Mucosa of descending colon (tissue), 3 donors: ENCODE measurements at regions of chr17 and their contacts with region 1.

Region 1: DNA sequence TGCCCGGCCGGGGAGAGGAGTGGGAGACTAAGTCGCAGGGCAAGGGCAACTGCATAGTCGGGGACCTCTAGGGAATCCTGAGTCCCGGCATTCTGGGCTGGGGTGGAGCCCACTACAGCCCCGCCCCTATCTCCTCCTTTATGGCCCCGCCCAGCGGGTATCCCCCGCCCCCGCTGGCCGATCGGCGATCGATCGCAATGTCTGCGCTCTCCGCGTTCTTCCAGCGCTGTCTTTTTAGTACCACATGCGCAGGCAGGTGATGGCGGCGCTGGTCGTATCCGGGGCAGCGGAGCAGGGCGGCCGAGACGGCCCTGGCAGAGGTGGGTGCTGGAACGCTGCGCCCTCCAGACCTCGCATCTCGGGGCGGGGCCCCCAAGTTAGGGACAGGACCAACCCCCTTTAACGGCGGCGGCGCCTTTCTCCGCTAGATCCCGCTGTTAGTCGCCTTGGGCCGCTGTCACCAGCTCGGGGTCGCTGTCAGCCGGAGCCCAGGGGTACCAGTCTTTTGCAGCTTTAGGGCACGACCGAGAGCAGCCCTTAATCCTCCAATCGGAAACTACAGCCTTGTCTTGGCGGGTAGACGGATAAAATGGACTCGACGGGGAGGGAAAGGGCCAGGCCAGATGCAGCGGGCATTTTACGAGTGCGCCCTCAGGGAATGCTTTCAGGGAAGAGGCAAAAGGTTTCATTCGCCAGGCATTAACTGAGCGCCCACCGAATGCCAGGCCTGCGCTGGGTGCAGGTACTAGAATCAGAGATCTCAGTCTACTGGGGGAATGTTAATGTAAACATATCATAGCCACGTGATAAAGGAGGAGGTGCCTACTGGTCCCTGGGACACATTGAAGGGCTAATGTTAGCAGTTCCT is at the start of gene DPH1:
- DNase-seq: peak; percentile 91 to 93 (median 92)
- ATAC-seq: peak; percentile 95
- H3K4me3 ChIP-seq: peak within 1 kb of the TSS; percentile 92
- H3K4me1 ChIP-seq: peaks cover 20% of the 10 kb centered on the region
- CTCF ChIP-seq: no peak
- total RNA-seq, gene DPH1: 33.1 to 43.7 (median 42.2) TPM

Region 2: GRCh38 chr17:1908699-1909309 is 121.3 kb before region 1 on chr17:
- intact Hi-C with region 1: loop called (anchors 5 kb)
- DNase-seq: peak; percentile 33 to 79 (median 45)
- ATAC-seq: peak; percentile 79
- H3K4me3 ChIP-seq: no peak overlapping the region
- H3K4me1 ChIP-seq: peaks cover 12% of the 10 kb centered on the region
- CTCF ChIP-seq: peak; percentile 31